Ovary (tissue), 10 donors: ENCODE measurements at regions of chr1 and their contacts with region 1.

Region 1: GRCh38 chr1:66242646-66243547 is 291.1 kb upstream of the SGIP1 start:
- DNase-seq: peak; percentile 54 to 86 (median 76)
- H3K4me3 ChIP-seq: no peak overlapping the region
- H3K27ac ChIP-seq: no peak overlapping the region
- H3K4me1 ChIP-seq: no peaks in the 10 kb centered on the region
- H3K27me3 ChIP-seq: no peaks in the 10 kb centered on the region
- CTCF ChIP-seq: peak; percentile 80 to 89 (median 88)
- EP300 ChIP-seq: no peak
- POLR2A ChIP-seq: no peak

Region 2: GRCh38 chr1:65958561-65959350 is 284.1 kb before region 1 on chr1:
- intact Hi-C with region 1: loop called in 2 of 4 experiments (anchors 5 to 10 kb)
- DNase-seq: no peak
- H3K4me3 ChIP-seq: no peak overlapping the region
- H3K27ac ChIP-seq: no peak overlapping the region
- H3K4me1 ChIP-seq: no peaks in the 10 kb centered on the region
- H3K27me3 ChIP-seq: no peaks in the 10 kb centered on the region
- CTCF ChIP-seq: peak; percentile 30 to 74 (median 56)
- EP300 ChIP-seq: no peak
- POLR2A ChIP-seq: no peak